A549 (cell line): ENCODE measurements at regions of chr19 and their contacts with region 1.

Region 1: GRCh38 chr19:14556662-14557188 is 15.1 kb downstream of the NDUFB7 start:
- DNase-seq: peak; percentile 66 to 83
- ATAC-seq: peak; percentile 84 to 90
- H3K4me3 ChIP-seq: no peak overlapping the region
- H3K27ac ChIP-seq: peak overlapping the region in 1 of 2 experiments; percentile 67; a peak in 3 of 6 replicates
- H3K4me1 ChIP-seq: no peaks in the 10 kb centered on the region
- CTCF ChIP-seq: peak; percentile 69
- EP300 ChIP-seq: no peak
- POLR2A ChIP-seq: no peak
- RAD21 ChIP-seq: peak; percentile 35 to 41; a peak in 3 of 5 replicates

Region 2: GRCh38 chr19:14505488-14506432 is 51.0 kb before region 1 on chr19:
- CTCF ChIA-PET with region 1: interaction called, 29 read pairs
- POLR2A ChIA-PET with region 1: no interaction called
- DNase-seq: peak; percentile 68 to 95
- ATAC-seq: peak; percentile 79 to 80
- H3K4me3 ChIP-seq: peak overlapping the region; percentile 35; the same call in 1 of the 3 replicates
- H3K27ac ChIP-seq: peak overlapping the region; percentile 94 to 100
- H3K4me1 ChIP-seq: peaks cover 73% of the 10 kb centered on the region
- CTCF ChIP-seq: peak; percentile 61
- EP300 ChIP-seq: peak in 1 of 2 experiments; percentile 24; a peak in 1 of 5 replicates
- POLR2A ChIP-seq: no peak
- RAD21 ChIP-seq: peak in 1 of 2 experiments; percentile 43; a peak in 2 of 5 replicates

Region 3: DNA sequence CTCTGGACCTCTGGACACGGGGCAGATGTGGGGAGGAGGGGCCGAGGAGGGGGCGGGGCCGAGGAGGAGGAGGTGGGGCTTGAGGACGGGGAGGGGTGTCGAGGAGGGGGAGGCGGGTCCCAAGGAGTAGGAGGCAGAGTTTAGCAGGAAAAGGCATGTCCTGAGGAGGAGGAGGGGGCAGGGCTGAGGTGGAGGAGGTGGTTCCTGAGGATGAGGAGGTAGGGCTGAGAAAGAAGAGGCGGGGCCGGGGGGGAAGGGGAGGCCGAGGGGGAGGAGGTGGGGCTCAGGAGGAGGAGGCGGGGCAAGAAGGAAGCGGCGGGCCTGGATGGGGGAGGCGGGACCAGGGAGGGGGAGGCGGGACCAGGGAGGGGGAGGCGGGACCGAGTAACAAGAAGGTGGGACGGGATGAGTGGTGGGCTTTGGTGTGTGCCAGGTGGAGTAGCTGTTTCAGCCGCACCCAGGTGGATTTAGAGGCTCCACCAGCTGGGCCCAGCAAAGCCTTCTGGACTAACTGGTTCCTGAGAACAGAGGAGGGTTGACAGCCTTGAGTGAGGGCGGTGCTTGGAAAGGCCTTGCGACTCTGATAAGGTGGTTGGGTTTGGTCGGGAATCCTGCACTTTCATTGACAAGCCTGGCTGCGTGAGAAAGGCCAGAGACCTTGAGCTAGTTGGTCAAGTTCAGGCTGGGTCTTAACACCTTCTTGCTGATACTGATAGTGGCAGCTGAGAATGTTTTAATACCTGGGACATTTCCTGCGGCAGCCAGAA is 19.6 kb before region 1 on chr19:
- CTCF ChIA-PET with region 1: interaction called, 13 read pairs
- POLR2A ChIA-PET with region 1: interaction called, 4 read pairs
- DNase-seq: peak; percentile 51 to 90
- ATAC-seq: peak; percentile 88 to 90
- H3K4me3 ChIP-seq: no peak overlapping the region
- H3K27ac ChIP-seq: peak overlapping the region in 1 of 2 experiments; percentile 66; a peak in 3 of 6 replicates
- H3K4me1 ChIP-seq: peaks cover 12% of the 10 kb centered on the region; the same call in 2 of the 3 replicates
- CTCF ChIP-seq: no peak
- EP300 ChIP-seq: no peak
- POLR2A ChIP-seq: no peak
- RAD21 ChIP-seq: no peak

Region 4: DNA sequence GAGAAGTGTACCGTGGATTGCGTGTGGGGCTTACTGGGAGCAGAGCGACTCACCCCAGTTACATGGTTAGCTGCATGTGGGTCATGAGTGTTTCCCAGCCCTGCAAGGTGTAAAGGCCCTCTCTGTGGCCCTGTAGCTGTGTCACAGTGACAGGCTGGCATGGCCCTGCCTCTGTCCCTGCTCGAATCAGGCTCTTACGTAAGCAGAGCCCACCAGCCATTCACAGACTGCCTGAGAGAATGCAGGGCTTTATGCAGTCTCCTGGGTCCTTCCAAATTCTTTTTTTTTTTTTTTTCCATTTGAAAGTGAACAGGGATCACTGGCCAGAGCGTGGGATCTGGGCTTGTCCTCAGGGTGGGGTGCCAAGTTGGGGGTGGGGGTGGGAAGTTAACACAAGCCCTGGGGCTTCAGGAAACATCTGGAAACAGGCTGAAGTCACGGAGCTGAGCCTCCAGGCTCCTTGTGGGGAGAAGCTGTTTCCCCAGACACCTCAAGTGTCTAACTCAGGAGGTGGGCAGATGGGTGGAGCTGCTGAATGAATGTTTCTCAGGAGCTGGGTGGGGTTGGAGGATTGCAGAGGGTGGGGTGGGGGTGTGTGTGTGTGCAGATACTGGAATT is 13.9 kb before region 1 on chr19:
- CTCF ChIA-PET with region 1: interaction called, 22 read pairs
- POLR2A ChIA-PET with region 1: interaction called, 4 read pairs
- DNase-seq: no peak
- ATAC-seq: no peak
- H3K4me3 ChIP-seq: no peak overlapping the region
- H3K27ac ChIP-seq: no peak overlapping the region
- H3K4me1 ChIP-seq: no peaks in the 10 kb centered on the region; the same call in 2 of the 3 replicates
- CTCF ChIP-seq: no peak
- EP300 ChIP-seq: no peak
- POLR2A ChIP-seq: no peak
- RAD21 ChIP-seq: no peak

Region 5: GRCh38 chr19:14571695-14572490 is 15.2 kb after region 1 on chr19 and contains the start of gene NDUFB7:
- CTCF ChIA-PET with region 1: interaction called, 39 read pairs
- POLR2A ChIA-PET with region 1: interaction called, 3 read pairs
- DNase-seq: peak; percentile 82 to 96
- ATAC-seq: peak; percentile 96
- H3K4me3 ChIP-seq: peak within 1 kb of the TSS; percentile 85
- H3K27ac ChIP-seq: peak within 1 kb of the TSS; percentile 85 to 98
- H3K4me1 ChIP-seq: peaks cover 6% of the 10 kb centered on the region; the same call in 1 of the 3 replicates
- CTCF ChIP-seq: peak; percentile 55
- EP300 ChIP-seq: no peak
- POLR2A ChIP-seq: peak; percentile 49
- RAD21 ChIP-seq: 0 out of 5 replicates have a peak, but pooled peaks of 1 of the 2 experiments have one; percentile 3
- polyA plus RNA-seq, gene NDUFB7: 73.7 and 82.3 TPM in 2 replicates